Right cardiac atrium (tissue), 5 donors: ENCODE measurements at regions of chr6 and their contacts with region 1.

Region 1: GRCh38 chr6:53300656-53301551 is 47.8 kb downstream of the ELOVL5 start:
- DNase-seq: peak in 2 of 3 donors; percentile 35 to 56
- ATAC-seq: peak; percentile 80 to 84
- H3K4me3 ChIP-seq: no peak overlapping the region
- H3K27ac ChIP-seq: peak overlapping the region; percentile 53
- H3K4me1 ChIP-seq: peaks cover 27% of the 10 kb centered on the region
- H3K27me3 ChIP-seq: no peaks in the 10 kb centered on the region

Region 2: GRCh38 chr6:53335208-53335994 is 34.5 kb after region 1 on chr6:
- intact Hi-C with region 1: loop called in 1 of 4 experiments (anchors 5 kb)
- DNase-seq: peak in 1 of 3 donors; percentile 55
- ATAC-seq: peak; percentile 30 to 56
- H3K4me3 ChIP-seq: no peak overlapping the region
- H3K27ac ChIP-seq: no peak overlapping the region
- H3K4me1 ChIP-seq: peaks cover 15% of the 10 kb centered on the region
- H3K27me3 ChIP-seq: no peaks in the 10 kb centered on the region

Region 3: GRCh38 chr6:53410508-53411258 is 109.8 kb after region 1 on chr6:
- intact Hi-C with region 1: no loop called
- DNase-seq: peak; percentile 25 to 81 (median 69)
- ATAC-seq: peak; percentile 91 to 93
- H3K4me3 ChIP-seq: no peak overlapping the region
- H3K27ac ChIP-seq: no peak overlapping the region
- H3K4me1 ChIP-seq: no peaks in the 10 kb centered on the region
- H3K27me3 ChIP-seq: no peaks in the 10 kb centered on the region